ENCODE measurements at regions of chr2 and their contacts with region 1.

Region 1: GRCh38 chr2:223930103-223930976 is 14.8 kb downstream of the WDFY1 start:
- DNase-seq: no peak
- H3K4me3 ChIP-seq: no peak overlapping the region
- H3K4me3 Mint-ChIP-seq: peak overlapping the region in 7 of 8 donors; percentile 66 to 83 (median 74)
- H3K27ac ChIP-seq: no peak overlapping the region
- H3K27ac Mint-ChIP-seq: peak overlapping the region; percentile 75 to 91 (median 87)
- H3K4me1 ChIP-seq: peaks cover 39% of the 10 kb centered on the region
- H3K4me1 Mint-ChIP-seq: peaks cover 34 to 77% (median 60%) of the 10 kb centered on the region in 4 donors
- H3K27me3 ChIP-seq: no peaks in the 10 kb centered on the region
- H3K27me3 Mint-ChIP-seq: no peaks in the 10 kb centered on the region

Region 2: DNA sequence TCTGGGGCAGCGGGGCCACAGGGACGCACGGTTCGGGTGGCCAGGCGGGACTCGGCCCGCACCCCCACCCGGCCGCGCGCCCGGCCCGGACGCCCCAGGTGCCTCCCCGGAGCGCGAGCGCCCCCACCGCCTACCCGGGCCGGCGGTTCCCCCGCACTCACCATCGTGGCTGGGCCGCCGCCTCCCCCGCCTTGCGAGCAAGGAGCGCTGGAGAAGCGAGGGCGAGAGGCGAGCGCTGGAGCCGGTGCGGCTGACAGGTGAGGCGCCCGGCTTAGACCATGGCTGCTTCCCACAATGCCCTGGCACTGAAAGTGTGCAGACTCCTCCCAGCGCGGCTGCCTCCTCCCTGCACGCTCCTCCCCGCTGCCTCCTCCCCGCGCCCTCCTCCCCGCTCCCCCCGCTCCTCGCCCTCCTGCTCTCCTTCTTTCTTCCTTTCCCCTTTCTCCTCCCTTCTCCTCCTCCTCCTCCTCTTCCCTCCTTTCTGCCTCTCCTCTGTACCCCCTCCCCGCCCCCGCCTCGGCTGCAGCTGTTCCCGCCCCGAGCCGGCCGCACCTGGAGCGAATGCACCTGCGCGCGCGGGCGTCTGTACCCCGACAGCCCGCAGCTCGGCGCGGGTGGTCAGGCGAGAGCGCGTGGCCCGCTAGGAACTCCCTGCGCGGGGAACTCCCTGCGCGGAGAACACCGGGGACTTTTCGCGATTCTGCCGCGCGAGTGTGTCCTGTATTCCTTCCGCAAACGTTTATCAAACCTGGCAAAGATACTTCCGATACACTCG is 92.9 kb before region 1 on chr2 and contains the start of gene AP1S3:
- CTCF ChIA-PET with region 1: no interaction called
- POLR2A ChIA-PET with region 1: no interaction called
- intact Hi-C with region 1: no loop called
- DNase-seq: peak; percentile 67 to 86 (median 69)
- H3K4me3 ChIP-seq: peak within 1 kb of the TSS; percentile 36 to 64
- H3K4me3 Mint-ChIP-seq: peak within 1 kb of the TSS; percentile 92 to 98 (median 94)
- H3K27ac ChIP-seq: peak within 1 kb of the TSS; percentile 52
- H3K27ac Mint-ChIP-seq: peak within 1 kb of the TSS; percentile 82 to 94 (median 90)
- H3K4me1 ChIP-seq: peaks cover 8% of the 10 kb centered on the region
- H3K4me1 Mint-ChIP-seq: peaks cover 9 to 12% (median 10%) of the 10 kb centered on the region in 4 donors
- H3K27me3 ChIP-seq: no peaks in the 10 kb centered on the region
- H3K27me3 Mint-ChIP-seq: no peaks in the 10 kb centered on the region
- total RNA-seq, gene AP1S3: 0.96 to 1.1 TPM

Region 3: GRCh38 chr2:223944703-223945531 is 14.6 kb after region 1 on chr2 and contains the start of gene WDFY1:
- CTCF ChIA-PET with region 1: interaction called, 4 read pairs
- POLR2A ChIA-PET with region 1: interaction called, 13 read pairs
- intact Hi-C with region 1: no loop called
- DNase-seq: peak; percentile 71 to 79 (median 74)
- H3K4me3 ChIP-seq: peak within 1 kb of the TSS; percentile 20 to 87
- H3K4me3 Mint-ChIP-seq: peak within 1 kb of the TSS; percentile 90 to 95 (median 92)
- H3K27ac ChIP-seq: peak within 1 kb of the TSS; percentile 50
- H3K27ac Mint-ChIP-seq: peak within 1 kb of the TSS; percentile 84 to 95 (median 92)
- H3K4me1 ChIP-seq: peaks cover 46% of the 10 kb centered on the region
- H3K4me1 Mint-ChIP-seq: peaks cover 37 to 70% (median 53%) of the 10 kb centered on the region in 4 donors
- H3K27me3 ChIP-seq: no peaks in the 10 kb centered on the region
- H3K27me3 Mint-ChIP-seq: no peaks in the 10 kb centered on the region
- total RNA-seq, gene WDFY1: 31.5 to 37.7 TPM

Region 4: DNA sequence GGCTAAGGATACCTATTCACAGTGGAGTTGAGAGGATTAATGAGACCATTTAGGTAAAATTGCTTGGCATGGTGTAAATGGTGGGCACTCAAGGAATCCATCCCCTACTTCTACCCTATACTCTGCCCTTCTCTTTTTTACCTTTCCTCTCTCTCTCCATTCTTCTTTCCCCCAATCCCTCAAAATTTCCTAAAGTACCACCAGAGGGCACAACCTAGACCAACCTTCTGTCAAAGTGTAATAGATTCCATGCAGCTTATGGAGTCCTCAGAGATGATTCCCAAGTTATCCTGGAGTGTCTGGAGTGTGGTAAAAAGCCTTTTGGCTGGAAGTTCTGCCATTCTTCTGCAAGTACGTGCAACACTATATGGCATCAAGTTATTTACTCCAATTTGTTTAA is 818.8 kb after region 1 on chr2:
- CTCF ChIA-PET with region 1: no interaction called
- POLR2A ChIA-PET with region 1: no interaction called
- intact Hi-C with region 1: no loop called
- DNase-seq: no peak
- H3K4me3 ChIP-seq: no peak overlapping the region
- H3K4me3 Mint-ChIP-seq: no peak overlapping the region
- H3K27ac ChIP-seq: no peak overlapping the region
- H3K27ac Mint-ChIP-seq: peak overlapping the region in 1 of 7 donors; percentile 7
- H3K4me1 ChIP-seq: no peaks in the 10 kb centered on the region
- H3K4me1 Mint-ChIP-seq: no peaks in the 10 kb centered on the region
- H3K27me3 ChIP-seq: no peaks in the 10 kb centered on the region
- H3K27me3 Mint-ChIP-seq: peaks cover 2 to 13% of the 10 kb centered on the region in 2 donors